Activated naive CD4-positive, alpha-beta T cell treated with anti-CD3 and anti-CD28 coated beads, Interleukin-2, amount 10 ng/mL, durations not matched to agents 7 days and 5 days (primary cell): ENCODE measurements at regions of chr16 and their contacts with region 1.

Region 1: GRCh38 chr16:57447186-57447962 is at the starts of genes CIAPIN1 and COQ9:
- DNase-seq: peak; percentile 97
- H3K4me3 Mint-ChIP-seq: peak within 1 kb of the TSS; percentile 94
- H3K27ac Mint-ChIP-seq: peak within 1 kb of the TSS; percentile 89
- H3K4me1 Mint-ChIP-seq: peaks cover 38% of the 10 kb centered on the region
- H3K27me3 Mint-ChIP-seq: no peaks in the 10 kb centered on the region

Region 2: DNA sequence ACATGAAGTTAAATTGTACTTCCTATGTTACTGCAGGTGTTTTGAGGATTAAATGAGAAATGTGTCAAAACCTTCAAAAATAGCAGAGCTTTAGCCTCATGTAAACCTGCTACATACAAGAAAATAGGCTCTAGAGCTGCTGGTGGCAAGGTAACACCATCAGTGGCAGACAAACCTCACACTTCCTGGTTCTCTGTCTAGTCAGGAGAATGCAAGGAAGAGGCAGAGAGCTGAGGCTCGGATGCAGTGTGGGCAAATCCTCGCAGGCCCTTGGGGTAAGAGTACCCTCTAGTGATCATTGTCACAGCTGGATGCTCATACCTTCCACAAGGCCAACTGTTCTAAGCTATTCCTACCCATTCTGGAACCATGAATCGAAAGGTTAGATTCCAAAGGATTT is 14.4 kb before region 1 on chr16:
- CTCF ChIA-PET with region 1: no interaction called
- DNase-seq: no peak
- H3K4me3 Mint-ChIP-seq: no peak overlapping the region
- H3K27ac Mint-ChIP-seq: peak overlapping the region; percentile 10
- H3K4me1 Mint-ChIP-seq: peaks cover 23% of the 10 kb centered on the region
- H3K27me3 Mint-ChIP-seq: no peaks in the 10 kb centered on the region

Region 3: DNA sequence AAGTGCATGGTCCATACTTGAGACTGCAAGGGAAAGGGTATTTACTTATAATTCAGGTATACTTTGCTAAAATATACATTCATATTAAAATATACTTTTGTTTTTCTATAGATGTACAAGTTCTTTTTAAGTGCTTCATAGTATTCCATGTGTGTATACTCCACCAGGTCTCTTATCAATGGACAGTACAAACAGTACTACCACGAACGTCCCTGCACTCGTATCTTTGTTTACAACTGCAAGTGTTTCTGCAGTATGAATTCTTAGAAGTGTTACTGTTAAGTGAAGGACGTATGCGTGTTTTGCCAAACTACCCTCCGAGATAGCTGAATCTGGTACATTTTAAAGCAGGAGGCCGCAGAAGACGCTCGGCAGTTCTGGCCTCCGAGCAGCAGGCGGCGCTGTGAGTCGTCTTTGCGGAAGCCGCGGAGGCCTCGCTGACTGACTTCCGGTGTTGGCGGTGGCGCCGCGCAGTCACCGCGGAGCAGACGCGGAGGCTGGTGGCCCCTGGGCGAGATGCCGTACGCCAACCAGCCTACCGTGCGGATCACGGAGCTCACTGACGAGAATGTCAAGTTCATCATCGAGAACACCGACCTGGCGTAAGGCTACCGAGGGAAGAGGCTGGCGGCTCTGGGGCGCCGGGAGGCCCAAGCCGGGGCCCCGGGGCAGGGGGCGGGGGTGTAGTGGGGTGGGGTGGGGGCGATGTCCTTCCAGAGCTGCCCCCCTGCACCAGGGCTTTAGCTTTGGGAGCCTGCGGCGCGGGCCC is 15.0 kb after region 1 on chr16 and contains the start of gene POLR2C:
- CTCF ChIA-PET with region 1: interaction called, 14 read pairs
- DNase-seq: peak; percentile 94
- H3K4me3 Mint-ChIP-seq: peak within 1 kb of the TSS; percentile 100
- H3K27ac Mint-ChIP-seq: peak within 1 kb of the TSS; percentile 97
- H3K4me1 Mint-ChIP-seq: peaks cover 28% of the 10 kb centered on the region
- H3K27me3 Mint-ChIP-seq: peaks cover 3% of the 10 kb centered on the region